ENCODE measurements at regions of chr1 and their contacts with region 1.

Region 1: GRCh38 chr1:44049839-44050238 is 18.6 kb upstream of the SLC6A9 start:
- DNase-seq: peak; percentile 91
- H3K4me3 ChIP-seq: no peak overlapping the region
- CTCF ChIP-seq: no peak

Region 2: DNA sequence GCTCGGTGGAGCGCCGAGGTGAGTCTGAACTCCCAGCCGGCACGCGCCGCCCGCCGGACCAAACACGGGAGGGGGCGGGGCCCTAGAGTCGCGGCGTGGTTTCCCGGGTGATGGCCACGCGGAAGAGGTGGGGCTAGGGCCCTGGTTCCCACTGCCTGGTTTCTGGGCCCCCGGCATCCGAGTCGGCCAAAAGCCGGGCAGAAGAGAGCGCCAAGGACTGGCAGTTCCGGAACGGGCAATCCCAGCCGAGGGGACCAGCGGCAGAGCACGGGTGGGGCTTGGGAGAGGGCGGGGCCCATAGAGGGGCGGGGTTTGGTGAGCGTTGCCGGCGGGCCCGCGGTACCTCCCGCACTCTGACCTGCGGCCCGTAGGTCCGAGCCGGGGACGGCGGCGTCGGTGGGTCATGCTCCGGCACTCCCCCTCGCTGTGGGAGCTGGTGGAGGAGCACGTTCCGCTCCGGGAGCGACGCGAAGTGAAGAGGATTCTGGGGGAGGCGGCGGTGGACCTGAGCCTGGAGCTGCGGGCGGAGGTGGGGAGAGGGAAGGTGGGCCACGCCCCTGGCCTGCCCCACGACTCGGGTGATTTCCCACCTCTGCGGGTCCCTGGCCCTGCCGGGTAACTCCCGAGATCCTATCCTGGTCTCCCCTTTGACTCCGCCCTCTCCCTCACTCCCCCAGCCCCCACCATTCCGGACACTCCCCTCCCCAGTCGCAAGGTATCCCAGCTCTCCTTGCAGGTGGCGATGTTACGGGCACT is 58.2 kb before region 1 on chr1 and contains the start of gene CCDC24:
- CTCF ChIA-PET with region 1: interaction called, 28 read pairs
- POLR2A ChIA-PET with region 1: interaction called, 3 read pairs
- DNase-seq: no peak
- H3K4me3 ChIP-seq: peak within 1 kb of the TSS; percentile 79
- CTCF ChIP-seq: peak; percentile 3

Region 3: GRCh38 chr1:44029906-44030604 is 19.8 kb before region 1 on chr1:
- CTCF ChIA-PET with region 1: interaction called, 128 read pairs
- POLR2A ChIA-PET with region 1: interaction called, 10 read pairs
- DNase-seq: no peak
- H3K4me3 ChIP-seq: peak overlapping the region; percentile 79
- CTCF ChIP-seq: no peak

Region 4: GRCh38 chr1:44237721-44238457 is 188.1 kb after region 1 on chr1:
- CTCF ChIA-PET with region 1: interaction called, 10 read pairs
- POLR2A ChIA-PET with region 1: no interaction called
- DNase-seq: no peak
- H3K4me3 ChIP-seq: no peak overlapping the region
- CTCF ChIP-seq: peak; percentile 91